HepG2 (cell line): ENCODE measurements at regions of chr17 and their contacts with region 1.

Region 1: GRCh38 chr17:80630560-80631120 is 86.0 kb downstream of the RPTOR start:
- DNase-seq: no peak
- ATAC-seq: no peak; the same call in 1 of the 3 replicates
- H3K4me3 ChIP-seq: no peak overlapping the region
- H3K27ac ChIP-seq: peak overlapping the region; percentile 85
- H3K4me1 ChIP-seq: peaks cover 63% of the 10 kb centered on the region
- H3K27me3 ChIP-seq: no peaks in the 10 kb centered on the region
- CTCF ChIP-seq: no peak
- EP300 ChIP-seq: no peak
- POLR2A ChIP-seq: no peak
- RAD21 ChIP-seq: no peak

Region 2: DNA sequence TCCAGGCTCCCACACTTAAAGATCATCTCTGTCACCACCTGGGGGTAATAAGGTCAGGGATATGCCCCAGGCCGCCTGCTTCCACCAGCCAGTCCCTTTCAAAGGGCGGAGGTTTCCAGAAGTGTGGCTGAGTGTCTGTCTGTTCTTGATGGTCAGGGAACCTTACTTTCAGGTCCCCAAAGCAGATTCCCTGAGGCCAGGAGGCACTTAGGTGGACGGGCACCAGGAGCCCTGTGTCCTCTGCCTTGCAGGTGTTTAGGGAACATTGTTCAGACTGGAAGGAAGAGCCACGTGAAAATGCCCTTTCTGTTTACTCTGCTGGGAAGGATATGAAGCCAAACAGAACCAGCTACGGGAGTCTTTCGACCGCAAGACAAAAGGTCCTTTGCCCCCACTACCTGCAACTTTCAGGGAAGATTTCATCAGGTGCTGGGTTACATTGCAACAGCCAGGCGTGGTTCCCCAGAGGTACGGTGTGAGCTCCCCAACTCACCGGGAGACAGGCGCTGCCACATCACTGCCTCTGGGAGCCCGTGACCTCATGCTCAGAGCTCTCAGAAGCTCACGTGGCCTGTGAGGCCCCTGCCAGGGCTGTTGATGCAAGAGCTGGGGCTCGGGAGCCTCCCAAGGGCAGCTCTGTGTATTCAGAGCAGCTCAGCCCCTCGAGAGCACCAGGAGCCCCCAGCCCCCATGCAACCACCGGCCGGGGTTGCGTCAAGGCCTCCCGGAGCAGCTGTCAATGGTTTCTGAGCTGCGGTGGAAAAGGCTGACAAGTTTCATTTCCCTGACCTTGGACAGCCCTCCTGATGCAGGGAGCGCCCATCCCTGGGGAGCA is 637.2 kb before region 1 on chr17:
- CTCF ChIA-PET with region 1: no interaction called
- POLR2A ChIA-PET with region 1: no interaction called
- in situ Hi-C with region 1: no loop called
- intact Hi-C with region 1: no loop called
- DNase-seq: peak; percentile 99
- ATAC-seq: peak; percentile 78
- H3K4me3 ChIP-seq: peak overlapping the region; percentile 51 to 77 (median 62)
- H3K27ac ChIP-seq: peak overlapping the region; percentile 98
- H3K4me1 ChIP-seq: peaks cover 85% of the 10 kb centered on the region
- H3K27me3 ChIP-seq: no peaks in the 10 kb centered on the region
- CTCF ChIP-seq: peak; percentile 46
- EP300 ChIP-seq: peak; percentile 95 to 96
- POLR2A ChIP-seq: peak in 1 of 2 experiments; percentile 93; a peak in 2 of 4 replicates
- RAD21 ChIP-seq: peak; percentile 69

Region 3: GRCh38 chr17:80512233-80512632 is 118.4 kb before region 1 on chr17:
- CTCF ChIA-PET with region 1: no interaction called
- POLR2A ChIA-PET with region 1: no interaction called
- in situ Hi-C with region 1: no loop called
- intact Hi-C with region 1: no loop called
- DNase-seq: no peak
- ATAC-seq: peak; percentile 15; the same call in 2 of the 3 replicates
- H3K4me3 ChIP-seq: no peak overlapping the region
- H3K27ac ChIP-seq: no peak overlapping the region
- H3K4me1 ChIP-seq: no peaks in the 10 kb centered on the region
- H3K27me3 ChIP-seq: peaks cover 0 to 66% of the 10 kb centered on the region in 2 experiments
- CTCF ChIP-seq: no peak
- EP300 ChIP-seq: no peak
- POLR2A ChIP-seq: no peak
- RAD21 ChIP-seq: no peak

Region 4: GRCh38 chr17:80575057-80575875 is 55.4 kb before region 1 on chr17:
- CTCF ChIA-PET with region 1: interaction called, 4 read pairs
- POLR2A ChIA-PET with region 1: no interaction called
- in situ Hi-C with region 1: no loop called
- intact Hi-C with region 1: loop called (anchors 1 kb)
- DNase-seq: peak; percentile 86
- ATAC-seq: peak; percentile 99
- H3K4me3 ChIP-seq: no peak overlapping the region
- H3K27ac ChIP-seq: no peak overlapping the region
- H3K4me1 ChIP-seq: peaks cover 5% of the 10 kb centered on the region; the same call in 1 of the 2 replicates
- H3K27me3 ChIP-seq: no peaks in the 10 kb centered on the region
- CTCF ChIP-seq: peak; percentile 100
- EP300 ChIP-seq: peak in 1 of 2 experiments; percentile 21; a peak in 1 of 4 replicates
- POLR2A ChIP-seq: no peak
- RAD21 ChIP-seq: peak; percentile 99

Region 5: GRCh38 chr17:80586846-80587228 is 43.8 kb before region 1 on chr17:
- CTCF ChIA-PET with region 1: no interaction called
- POLR2A ChIA-PET with region 1: no interaction called
- in situ Hi-C with region 1: no loop called
- intact Hi-C with region 1: no loop called
- DNase-seq: no peak
- ATAC-seq: no peak
- H3K4me3 ChIP-seq: no peak overlapping the region
- H3K27ac ChIP-seq: no peak overlapping the region
- H3K4me1 ChIP-seq: peaks cover 9% of the 10 kb centered on the region
- H3K27me3 ChIP-seq: no peaks in the 10 kb centered on the region
- CTCF ChIP-seq: no peak
- EP300 ChIP-seq: no peak
- POLR2A ChIP-seq: no peak
- RAD21 ChIP-seq: no peak

Region 6: DNA sequence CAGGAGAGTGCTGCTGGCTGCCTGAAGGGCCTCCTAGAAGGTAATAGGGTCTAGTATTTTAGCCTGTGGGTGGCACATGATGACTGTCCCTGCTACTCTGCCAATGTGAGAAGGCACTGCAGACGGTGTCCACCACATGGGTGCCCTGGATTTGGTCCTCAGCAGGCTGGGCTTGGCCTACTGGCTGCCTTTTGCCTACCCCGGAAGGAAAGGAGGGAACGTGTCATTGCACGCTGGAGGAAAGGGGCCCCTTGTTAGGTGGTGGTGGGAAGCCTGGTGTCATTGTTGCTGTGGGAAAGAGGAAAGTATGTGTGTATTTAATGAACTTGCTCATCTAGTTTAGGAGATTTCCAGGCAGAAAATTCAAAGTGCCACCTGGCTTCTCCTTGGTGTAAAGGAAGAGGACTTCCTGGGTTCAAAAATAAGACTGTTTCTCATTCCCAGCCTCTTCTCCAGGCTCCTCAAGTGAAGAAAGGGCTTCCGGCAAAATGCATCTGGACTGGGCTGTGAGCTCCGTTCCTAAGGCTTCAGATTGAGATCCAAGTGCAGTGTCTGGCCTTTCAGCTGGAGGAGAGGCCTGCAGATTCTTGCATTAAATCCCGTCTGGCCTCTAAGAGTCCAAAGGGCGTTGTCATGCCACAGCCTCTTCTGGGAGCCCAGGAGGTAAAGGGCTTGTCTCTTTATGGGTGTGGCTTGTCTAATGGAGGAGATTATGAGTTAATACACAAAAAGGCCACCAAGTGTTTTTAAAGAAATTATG is 30.9 kb before region 1 on chr17:
- CTCF ChIA-PET with region 1: no interaction called
- POLR2A ChIA-PET with region 1: interaction called, 32 read pairs
- in situ Hi-C with region 1: no loop called
- intact Hi-C with region 1: no loop called
- DNase-seq: peak; percentile 89
- ATAC-seq: peak; percentile 85
- H3K4me3 ChIP-seq: peak overlapping the region; percentile 21 to 59 (median 31); a peak in 5 of 6 replicates
- H3K27ac ChIP-seq: peak overlapping the region; percentile 79
- H3K4me1 ChIP-seq: peaks cover 71% of the 10 kb centered on the region
- H3K27me3 ChIP-seq: no peaks in the 10 kb centered on the region
- CTCF ChIP-seq: no peak
- EP300 ChIP-seq: peak in 1 of 2 experiments; percentile 35; a peak in 1 of 4 replicates
- POLR2A ChIP-seq: no peak
- RAD21 ChIP-seq: no peak

Region 7: GRCh38 chr17:80649678-80650672 is 19.3 kb after region 1 on chr17:
- CTCF ChIA-PET with region 1: no interaction called
- POLR2A ChIA-PET with region 1: interaction called, 22 read pairs
- in situ Hi-C with region 1: no loop called
- intact Hi-C with region 1: no loop called
- DNase-seq: peak; percentile 77
- ATAC-seq: peak; percentile 98
- H3K4me3 ChIP-seq: no peak overlapping the region
- H3K27ac ChIP-seq: no peak overlapping the region
- H3K4me1 ChIP-seq: peaks cover 14% of the 10 kb centered on the region
- H3K27me3 ChIP-seq: no peaks in the 10 kb centered on the region
- CTCF ChIP-seq: peak; percentile 78
- EP300 ChIP-seq: no peak
- POLR2A ChIP-seq: no peak
- RAD21 ChIP-seq: peak; percentile 96

Region 8: DNA sequence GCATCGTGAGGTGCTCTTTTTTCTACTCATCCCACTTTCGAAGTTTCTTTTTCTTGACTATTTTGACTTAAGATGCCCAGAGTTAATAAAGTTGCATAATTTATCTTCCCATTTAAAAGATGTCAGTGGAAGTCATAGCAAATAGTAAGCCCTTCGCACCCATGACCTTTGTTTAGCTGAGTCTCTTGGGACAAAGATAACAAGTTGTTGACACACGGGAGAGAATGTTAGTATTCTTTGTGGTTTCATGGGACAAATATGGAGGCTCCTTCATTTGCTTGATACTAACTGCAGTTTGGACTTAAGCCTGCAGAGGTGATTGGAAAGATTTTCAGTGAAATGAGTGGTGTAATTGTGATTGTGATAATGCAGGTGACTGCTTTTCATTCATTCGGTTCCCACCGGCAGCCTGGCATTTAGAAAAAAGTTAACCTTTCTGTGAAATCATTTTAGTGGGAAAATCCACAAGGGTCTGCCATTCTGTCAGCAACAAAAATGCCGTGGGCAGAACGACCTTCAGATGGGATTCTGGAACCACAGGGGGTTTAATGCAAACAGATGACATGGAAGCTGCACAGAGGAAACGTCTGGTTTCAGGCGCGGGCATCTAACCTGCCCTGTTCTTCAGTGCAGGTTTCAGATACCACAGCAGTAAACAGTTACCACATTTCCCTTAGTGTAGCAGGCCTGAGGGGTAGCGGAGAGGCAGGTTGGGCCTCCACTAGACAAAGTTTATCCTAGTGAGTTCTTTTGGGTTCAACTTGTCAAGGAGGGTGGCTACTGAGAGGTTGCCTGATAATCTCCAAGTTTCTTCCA is 37.0 kb after region 1 on chr17:
- CTCF ChIA-PET with region 1: no interaction called
- POLR2A ChIA-PET with region 1: interaction called, 13 read pairs
- in situ Hi-C with region 1: no loop called
- intact Hi-C with region 1: loop called (anchors 2 kb)
- DNase-seq: peak; percentile 91
- ATAC-seq: peak; percentile 60
- H3K4me3 ChIP-seq: peak overlapping the region in 1 of 3 experiments; percentile 3; a peak in 1 of 6 replicates
- H3K27ac ChIP-seq: peak overlapping the region; percentile 65
- H3K4me1 ChIP-seq: peaks cover 100% of the 10 kb centered on the region
- H3K27me3 ChIP-seq: no peaks in the 10 kb centered on the region
- CTCF ChIP-seq: no peak
- EP300 ChIP-seq: peak in 1 of 2 experiments; percentile 88; a peak in 2 of 4 replicates
- POLR2A ChIP-seq: no peak
- RAD21 ChIP-seq: no peak

Region 9: GRCh38 chr17:80732268-80732667 is 101.6 kb after region 1 on chr17:
- CTCF ChIA-PET with region 1: no interaction called
- POLR2A ChIA-PET with region 1: no interaction called
- in situ Hi-C with region 1: no loop called
- intact Hi-C with region 1: no loop called
- DNase-seq: no peak
- ATAC-seq: no peak
- H3K4me3 ChIP-seq: no peak overlapping the region
- H3K27ac ChIP-seq: no peak overlapping the region
- H3K4me1 ChIP-seq: no peaks in the 10 kb centered on the region
- H3K27me3 ChIP-seq: no peaks in the 10 kb centered on the region
- CTCF ChIP-seq: no peak
- EP300 ChIP-seq: no peak
- POLR2A ChIP-seq: no peak
- RAD21 ChIP-seq: no peak